MCF 10A (cell line): ENCODE measurements at regions of chr5 and their contacts with region 1.

Region 1: GRCh38 chr5:34656001-34656699 is at the start of gene RAI14:
- DNase-seq: peak; percentile 74
- H3K4me3 Mint-ChIP-seq: peak within 1 kb of the TSS; percentile 73
- H3K27ac Mint-ChIP-seq: peak within 1 kb of the TSS; percentile 92
- H3K4me1 Mint-ChIP-seq: peaks cover 15% of the 10 kb centered on the region
- H3K27me3 Mint-ChIP-seq: no peaks in the 10 kb centered on the region
- CTCF ChIP-seq: no peak
- total RNA-seq, gene RAI14: 47.6 and 47.9 TPM in 2 replicates

Region 2: DNA sequence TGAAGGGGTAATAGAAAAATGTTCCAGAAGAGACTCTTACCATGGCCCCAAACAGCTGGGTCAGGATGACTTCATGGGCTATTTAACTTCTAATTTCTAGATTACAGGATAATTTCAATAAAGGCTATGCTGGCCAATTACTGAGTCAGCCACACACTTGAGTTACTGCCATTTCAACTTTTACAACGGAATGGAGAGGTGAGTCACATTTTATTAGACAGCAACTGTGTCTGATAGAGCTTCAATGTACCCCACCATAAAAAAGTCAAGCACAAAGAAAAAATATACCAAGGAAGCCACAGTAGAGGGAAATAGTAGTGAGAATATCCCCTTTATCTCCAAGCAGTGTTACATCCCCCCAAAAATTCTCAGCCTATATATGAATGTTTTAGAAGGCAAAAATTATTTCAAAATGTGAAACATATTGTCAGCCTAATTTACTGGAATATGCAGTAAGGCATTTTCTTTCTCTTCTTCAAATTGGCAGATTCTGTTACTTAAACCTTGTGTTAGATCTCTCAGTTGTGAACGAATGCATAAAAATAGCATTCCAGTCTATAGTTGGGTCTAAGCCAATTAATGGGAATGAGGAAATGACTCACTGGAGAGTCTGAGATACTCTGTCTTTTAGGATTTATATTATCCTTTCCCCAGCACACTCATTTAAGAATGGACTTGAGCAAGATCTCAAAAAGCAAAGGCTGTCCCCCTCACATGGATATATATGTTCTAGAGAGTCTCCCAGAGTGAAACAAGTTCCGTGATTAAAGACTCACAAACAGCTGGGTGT is 47.1 kb before region 1 on chr5:
- CTCF ChIA-PET with region 1: no interaction called
- POLR2A ChIA-PET with region 1: interaction called, 6 read pairs
- intact Hi-C with region 1: loop called (anchors 2 kb)
- DNase-seq: peak; percentile 89
- H3K4me3 Mint-ChIP-seq: peak overlapping the region; percentile 32
- H3K27ac Mint-ChIP-seq: peak overlapping the region; percentile 56
- H3K4me1 Mint-ChIP-seq: peaks cover 14% of the 10 kb centered on the region
- H3K27me3 Mint-ChIP-seq: no peaks in the 10 kb centered on the region
- CTCF ChIP-seq: no peak

Region 3: GRCh38 chr5:34686762-34687268 is 30.7 kb after region 1 on chr5:
- CTCF ChIA-PET with region 1: interaction called, 5 read pairs
- POLR2A ChIA-PET with region 1: interaction called, 3 read pairs
- intact Hi-C with region 1: loop called (anchors 2 kb)
- DNase-seq: peak; percentile 93
- H3K4me3 Mint-ChIP-seq: peak overlapping the region; percentile 10
- H3K27ac Mint-ChIP-seq: peak overlapping the region; percentile 55
- H3K4me1 Mint-ChIP-seq: peaks cover 16% of the 10 kb centered on the region
- H3K27me3 Mint-ChIP-seq: no peaks in the 10 kb centered on the region
- CTCF ChIP-seq: no peak

Region 4: DNA sequence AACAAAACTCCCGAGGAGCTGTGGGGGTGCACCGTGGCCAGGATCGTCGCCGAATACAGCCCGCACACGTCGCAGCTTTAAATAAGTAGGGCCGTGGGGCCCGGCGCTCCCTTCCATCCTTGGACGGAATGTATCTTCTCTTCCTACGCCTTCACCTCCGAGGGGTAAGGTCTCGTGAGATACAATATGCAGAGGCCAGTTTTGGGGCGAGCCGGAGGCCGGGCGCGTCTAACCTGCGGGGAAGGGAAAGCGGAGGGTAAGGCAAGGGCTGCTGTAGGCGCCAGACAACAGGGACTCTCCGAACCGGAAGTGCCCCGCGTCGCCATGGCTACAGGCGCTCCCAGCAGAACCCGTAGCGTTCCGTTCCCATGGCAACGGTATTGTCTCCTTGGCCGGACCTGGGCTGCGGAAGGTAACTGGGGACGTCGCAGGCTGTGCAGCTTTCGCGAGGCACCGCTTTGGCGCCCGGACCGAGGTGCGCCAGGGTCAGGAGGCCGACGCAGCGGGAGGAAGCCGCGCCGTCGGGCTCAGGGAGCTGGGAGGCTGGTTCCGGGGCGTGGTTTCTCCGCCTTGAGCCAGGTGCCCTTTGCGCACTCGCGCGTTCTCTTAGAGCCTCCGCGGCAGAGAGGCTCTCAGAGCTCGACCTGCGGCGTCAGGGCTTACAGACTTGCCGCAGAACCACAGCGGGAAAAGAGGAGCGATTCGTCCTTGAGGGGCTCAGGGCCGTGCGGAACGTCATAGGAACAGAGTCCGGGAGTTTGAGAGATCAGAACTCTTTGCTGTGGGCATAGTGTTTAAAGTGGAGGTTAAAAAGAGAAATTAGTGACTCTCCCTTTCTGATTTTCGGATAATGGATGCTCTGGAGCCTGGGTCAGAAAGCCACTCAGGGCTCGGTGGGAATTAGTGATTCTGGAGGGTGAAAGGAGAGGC is 182.9 kb after region 1 on chr5 and contains the start of gene TTC23L:
- CTCF ChIA-PET with region 1: no interaction called
- POLR2A ChIA-PET with region 1: interaction called, 10 read pairs
- intact Hi-C with region 1: loop called (anchors 10 kb)
- DNase-seq: peak; percentile 89
- H3K4me3 Mint-ChIP-seq: peak within 1 kb of the TSS; percentile 88
- H3K27ac Mint-ChIP-seq: peak within 1 kb of the TSS; percentile 92
- H3K4me1 Mint-ChIP-seq: peaks cover 11% of the 10 kb centered on the region
- H3K27me3 Mint-ChIP-seq: no peaks in the 10 kb centered on the region
- CTCF ChIP-seq: no peak
- total RNA-seq, gene TTC23L: 0.14 and 0.69 TPM in 2 replicates